Left colon (tissue), 2 donors: ENCODE measurements at regions of chr10 and their contacts with region 1.

Region 1: GRCh38 chr10:62166331-62167131 is 102.1 kb downstream of the RTKN2 start:
- DNase-seq: no peak
- ATAC-seq: peak; percentile 55

Region 2: GRCh38 chr10:62050893-62051433 is 115.6 kb before region 1 on chr10:
- intact Hi-C with region 1: no loop called
- DNase-seq: peak in 1 of 2 donors; percentile 38
- ATAC-seq: no peak

Region 3: GRCh38 chr10:62109587-62110293 is 56.8 kb before region 1 on chr10:
- intact Hi-C with region 1: loop called in 1 of 2 experiments (anchors 10 kb)
- DNase-seq: no peak
- ATAC-seq: no peak

Region 4: GRCh38 chr10:62268399-62269114 is 102.0 kb after region 1 on chr10 and contains the start of gene RTKN2:
- intact Hi-C with region 1: no loop called
- DNase-seq: peak; percentile 82 to 91
- ATAC-seq: peak; percentile 98
- total RNA-seq, gene RTKN2: 1.1 to 2.5 TPM

Region 5: GRCh38 chr10:62373995-62374861 is 207.7 kb after region 1 on chr10 and contains the start of gene ZNF365:
- intact Hi-C with region 1: no loop called
- DNase-seq: peak in 1 of 2 donors; percentile 7
- ATAC-seq: peak; percentile 43
- total RNA-seq, gene ZNF365: not detected